A673 (cell line): ENCODE measurements at regions of chr13 and their contacts with region 1.

Region 1: GRCh38 chr13:39684531-39685137 is 29.2 kb downstream of the COG6 start:
- DNase-seq: peak; percentile 73
- H3K4me3 ChIP-seq: no peak overlapping the region
- H3K27ac ChIP-seq: no peak overlapping the region
- H3K4me1 ChIP-seq: no peaks in the 10 kb centered on the region
- H3K27me3 ChIP-seq: no peaks in the 10 kb centered on the region
- CTCF ChIP-seq: peak; percentile 56

Region 2: GRCh38 chr13:38213314-38213713 is 1471.3 kb before region 1 on chr13:
- CTCF ChIA-PET with region 1: no interaction called
- POLR2A ChIA-PET with region 1: no interaction called
- intact Hi-C with region 1: no loop called
- DNase-seq: peak; percentile 19
- H3K4me3 ChIP-seq: no peak overlapping the region
- H3K27ac ChIP-seq: no peak overlapping the region
- H3K4me1 ChIP-seq: no peaks in the 10 kb centered on the region
- H3K27me3 ChIP-seq: no peaks in the 10 kb centered on the region
- CTCF ChIP-seq: no peak

Region 3: DNA sequence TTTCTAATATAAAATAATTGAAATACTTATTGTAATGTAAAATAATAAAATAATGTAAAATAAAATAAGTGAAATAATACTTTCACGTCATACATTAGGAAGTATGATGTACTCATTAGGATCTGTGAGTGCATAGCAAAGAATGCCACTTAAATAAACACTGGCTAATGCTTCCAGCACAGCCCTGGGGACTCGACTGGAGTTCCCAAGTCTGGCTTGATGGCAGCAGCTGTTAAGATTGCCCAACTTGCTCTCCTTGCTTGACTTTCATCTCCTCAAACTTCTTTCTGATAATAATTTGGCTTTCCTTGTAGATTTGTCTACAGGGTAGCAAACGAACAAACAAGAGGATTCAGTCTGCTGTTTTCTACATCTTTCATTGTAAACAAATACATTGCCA is 162.7 kb after region 1 on chr13:
- CTCF ChIA-PET with region 1: no interaction called
- POLR2A ChIA-PET with region 1: no interaction called
- intact Hi-C with region 1: no loop called
- DNase-seq: no peak
- H3K4me3 ChIP-seq: no peak overlapping the region
- H3K27ac ChIP-seq: no peak overlapping the region
- H3K4me1 ChIP-seq: no peaks in the 10 kb centered on the region
- H3K27me3 ChIP-seq: no peaks in the 10 kb centered on the region
- CTCF ChIP-seq: no peak

Region 4: GRCh38 chr13:40770934-40771618 is 1086.4 kb after region 1 on chr13 and contains the start of gene MRPS31:
- CTCF ChIA-PET with region 1: no interaction called
- POLR2A ChIA-PET with region 1: no interaction called
- intact Hi-C with region 1: loop called (anchors 10 kb)
- DNase-seq: peak; percentile 95
- H3K4me3 ChIP-seq: peak within 1 kb of the TSS; percentile 86
- H3K27ac ChIP-seq: peak within 1 kb of the TSS; percentile 87
- H3K4me1 ChIP-seq: peaks cover 3% of the 10 kb centered on the region
- H3K27me3 ChIP-seq: no peaks in the 10 kb centered on the region
- CTCF ChIP-seq: no peak
- total RNA-seq, gene MRPS31: 32.0 and 32.3 TPM in 2 replicates